BJ (cell line): ENCODE measurements at regions of chr3 and their contacts with region 1.

Region 1: GRCh38 chr3:149566292-149566975 is 91.4 kb downstream of the WWTR1 start:
- DNase-seq: no peak
- H3K4me3 ChIP-seq: no peak overlapping the region
- H3K27me3 ChIP-seq: no peaks in the 10 kb centered on the region
- CTCF ChIP-seq: no peak

Region 2: GRCh38 chr3:149657926-149658733 is 91.7 kb after region 1 on chr3 and contains the start of gene WWTR1:
- CTCF ChIA-PET with region 1: interaction called, 19 read pairs
- POLR2A ChIA-PET with region 1: no interaction called
- DNase-seq: peak; percentile 76
- H3K4me3 ChIP-seq: peak within 1 kb of the TSS; percentile 60
- H3K27me3 ChIP-seq: no peaks in the 10 kb centered on the region
- CTCF ChIP-seq: 0 out of 2 replicates have a peak, but pooled peaks have one; percentile 11
- polyA plus RNA-seq, gene WWTR1: 94.5 and 119 TPM in 2 replicates